Motor neuron (in vitro differentiated cells): ENCODE measurements at regions of chr10 and their contacts with region 1.

Region 1: DNA sequence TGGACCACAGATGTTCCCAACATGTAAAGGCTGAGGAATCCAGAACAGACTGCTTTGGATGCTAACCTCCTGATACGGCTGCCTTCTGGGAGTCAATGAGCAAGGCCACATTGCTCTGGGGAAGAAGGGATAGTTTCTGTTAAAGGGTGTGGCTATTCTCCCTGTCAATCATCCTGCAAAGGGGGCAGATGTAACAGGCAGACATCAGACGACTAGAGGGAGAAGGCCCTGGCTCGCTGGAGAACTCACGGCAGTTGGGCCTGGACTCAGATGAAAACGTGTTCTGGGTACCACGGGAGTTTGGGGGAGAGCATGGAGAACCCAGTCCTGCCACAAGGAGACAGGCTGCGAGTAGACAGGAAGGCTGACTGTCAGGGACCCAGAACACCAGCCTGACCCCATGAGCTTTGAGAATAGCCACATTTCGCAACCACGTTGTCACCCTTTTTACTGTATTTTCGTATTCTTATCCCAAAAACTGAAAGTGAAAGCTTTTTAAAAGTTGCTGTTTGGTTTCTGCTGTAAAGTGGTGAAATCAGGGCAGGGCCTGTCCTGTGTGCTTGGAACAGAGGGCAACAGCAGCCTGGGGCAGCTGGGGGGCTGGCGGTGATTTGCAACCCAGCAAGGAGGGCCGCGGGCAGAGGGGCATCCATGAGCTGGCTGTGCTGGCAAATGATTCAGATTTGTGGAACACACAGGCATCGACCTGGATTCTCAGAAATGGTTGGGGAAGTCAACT is 95.3 kb downstream of the MYOF start:
- ATAC-seq: peak in 4 of 8 experiments; percentile 54 to 68 (median 60)
- H3K4me3 ChIP-seq: no peak overlapping the region
- H3K27ac ChIP-seq: no peak overlapping the region
- H3K4me1 ChIP-seq: no peaks in the 10 kb centered on the region

Region 2: GRCh38 chr10:93235686-93236085 is 151.1 kb before region 1 on chr10:
- in situ Hi-C with region 1: no loop called
- ATAC-seq: no peak
- H3K4me3 ChIP-seq: no peak overlapping the region
- H3K27ac ChIP-seq: no peak overlapping the region
- H3K4me1 ChIP-seq: no peaks in the 10 kb centered on the region

Region 3: GRCh38 chr10:93482145-93482834 is 95.5 kb after region 1 on chr10 and contains the start of gene MYOF:
- in situ Hi-C with region 1: loop called in 4 of 9 experiments (anchors 10 to 25 kb)
- ATAC-seq: peak; percentile 65 to 89 (median 79)
- H3K4me3 ChIP-seq: peak within 1 kb of the TSS; percentile 17 to 38 (median 33)
- H3K27ac ChIP-seq: no peak within 1 kb of the TSS
- H3K4me1 ChIP-seq: peaks cover 0 to 6% of the 10 kb centered on the region in 2 donors
- total RNA-seq, gene MYOF: 0.29 to 258 (median 13.7) TPM

Region 4: GRCh38 chr10:93566435-93567276 is 179.9 kb after region 1 on chr10 and contains the start of gene FFAR4:
- in situ Hi-C with region 1: no loop called
- ATAC-seq: peak; percentile 47 to 86 (median 70)
- H3K4me3 ChIP-seq: peak within 1 kb of the TSS; percentile 21 to 32 (median 26)
- H3K27ac ChIP-seq: no peak within 1 kb of the TSS
- H3K4me1 ChIP-seq: no peaks in the 10 kb centered on the region
- total RNA-seq, gene FFAR4: 0.09 to 0.43 (median 0.21) TPM in 4 of 8 experiments, not detected in the others

Region 5: DNA sequence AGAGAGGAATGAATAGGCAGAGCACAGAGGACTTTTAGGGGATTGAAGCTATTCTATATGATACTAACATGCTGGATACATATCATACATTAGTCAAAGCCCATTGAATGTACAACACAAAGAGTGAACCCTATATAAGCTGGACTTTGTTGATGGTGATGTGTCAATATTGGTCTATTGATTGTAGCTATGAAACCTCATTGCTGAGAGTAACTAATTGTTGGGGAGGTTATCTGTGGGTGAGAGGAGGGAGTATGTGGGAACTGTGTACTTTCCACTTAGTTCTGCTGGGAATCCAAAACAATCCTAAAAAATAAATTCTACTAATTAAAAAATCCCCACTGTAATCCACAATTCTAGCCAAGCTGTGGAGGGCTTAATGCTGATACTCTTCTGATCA is 1529.6 kb after region 1 on chr10:
- in situ Hi-C with region 1: no loop called
- ATAC-seq: no peak
- H3K4me3 ChIP-seq: no peak overlapping the region
- H3K27ac ChIP-seq: no peak overlapping the region
- H3K4me1 ChIP-seq: no peaks in the 10 kb centered on the region